ENCODE measurements at regions of chr9 and their contacts with region 1.

Region 1: GRCh38 chr9:136482793-136483588 is at the start of gene SEC16A:
- DNase-seq: peak; percentile 100
- H3K4me3 Mint-ChIP-seq: peak within 1 kb of the TSS; percentile 98
- H3K27ac Mint-ChIP-seq: peak within 1 kb of the TSS; percentile 98
- H3K4me1 Mint-ChIP-seq: peaks cover 30% of the 10 kb centered on the region
- H3K27me3 Mint-ChIP-seq: no peaks in the 10 kb centered on the region
- total RNA-seq, gene SEC16A: 54.1 to 57.0 TPM

Region 2: GRCh38 chr9:136329211-136329627 is 153.8 kb before region 1 on chr9:
- CTCF ChIA-PET with region 1: no interaction called
- POLR2A ChIA-PET with region 1: no interaction called
- intact Hi-C with region 1: no loop called
- DNase-seq: no peak
- H3K4me3 Mint-ChIP-seq: peak overlapping the region; percentile 35
- H3K27ac Mint-ChIP-seq: no peak overlapping the region
- H3K4me1 Mint-ChIP-seq: peaks cover 4% of the 10 kb centered on the region
- H3K27me3 Mint-ChIP-seq: no peaks in the 10 kb centered on the region

Region 3: DNA sequence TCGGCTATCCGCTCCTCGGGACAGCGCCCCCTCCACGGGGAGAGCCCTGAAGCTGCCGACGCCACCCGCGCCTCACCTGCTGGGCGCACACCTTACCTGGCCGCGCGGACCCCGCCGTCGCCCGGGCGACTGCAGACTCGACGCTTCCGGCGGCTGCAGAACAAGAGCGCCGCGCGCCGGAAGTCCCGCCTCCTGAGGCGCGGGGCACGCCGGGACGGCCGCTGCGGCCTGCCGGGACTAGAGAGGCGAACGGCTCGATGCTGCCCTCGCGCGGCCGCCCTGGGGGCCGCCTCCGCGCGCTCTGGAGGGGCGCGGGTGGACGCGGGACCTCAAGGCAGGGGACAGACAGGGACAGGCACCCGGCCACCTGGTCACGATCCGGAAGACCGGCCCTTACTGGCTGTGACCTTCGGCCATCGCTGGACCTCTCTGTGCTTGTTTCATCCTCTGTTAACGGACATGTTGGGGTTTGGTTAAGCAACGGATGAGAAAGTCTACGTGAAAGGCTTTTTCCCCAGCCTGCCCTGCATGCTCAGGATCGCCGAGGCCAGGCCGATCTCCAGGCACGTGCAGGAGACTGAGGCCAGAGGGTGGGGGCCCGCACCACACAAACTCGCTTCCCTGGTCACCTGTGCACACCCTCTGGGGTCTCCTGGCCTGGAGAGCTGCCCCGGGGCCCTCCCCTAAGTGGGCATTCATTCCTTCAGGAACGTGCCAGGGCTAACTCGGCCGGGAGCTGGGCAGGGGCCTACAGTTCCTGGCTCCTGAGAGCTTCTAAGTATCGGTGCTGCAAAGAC is 82.8 kb before region 1 on chr9 and contains the start of gene SNAPC4:
- CTCF ChIA-PET with region 1: no interaction called
- POLR2A ChIA-PET with region 1: no interaction called
- intact Hi-C with region 1: loop called (anchors 1 kb)
- DNase-seq: peak; percentile 91
- H3K4me3 Mint-ChIP-seq: peak within 1 kb of the TSS; percentile 83
- H3K27ac Mint-ChIP-seq: peak within 1 kb of the TSS; percentile 76
- H3K4me1 Mint-ChIP-seq: peaks cover 50% of the 10 kb centered on the region
- H3K27me3 Mint-ChIP-seq: no peaks in the 10 kb centered on the region
- total RNA-seq, gene SNAPC4: 13.9 to 14.3 TPM

Region 4: DNA sequence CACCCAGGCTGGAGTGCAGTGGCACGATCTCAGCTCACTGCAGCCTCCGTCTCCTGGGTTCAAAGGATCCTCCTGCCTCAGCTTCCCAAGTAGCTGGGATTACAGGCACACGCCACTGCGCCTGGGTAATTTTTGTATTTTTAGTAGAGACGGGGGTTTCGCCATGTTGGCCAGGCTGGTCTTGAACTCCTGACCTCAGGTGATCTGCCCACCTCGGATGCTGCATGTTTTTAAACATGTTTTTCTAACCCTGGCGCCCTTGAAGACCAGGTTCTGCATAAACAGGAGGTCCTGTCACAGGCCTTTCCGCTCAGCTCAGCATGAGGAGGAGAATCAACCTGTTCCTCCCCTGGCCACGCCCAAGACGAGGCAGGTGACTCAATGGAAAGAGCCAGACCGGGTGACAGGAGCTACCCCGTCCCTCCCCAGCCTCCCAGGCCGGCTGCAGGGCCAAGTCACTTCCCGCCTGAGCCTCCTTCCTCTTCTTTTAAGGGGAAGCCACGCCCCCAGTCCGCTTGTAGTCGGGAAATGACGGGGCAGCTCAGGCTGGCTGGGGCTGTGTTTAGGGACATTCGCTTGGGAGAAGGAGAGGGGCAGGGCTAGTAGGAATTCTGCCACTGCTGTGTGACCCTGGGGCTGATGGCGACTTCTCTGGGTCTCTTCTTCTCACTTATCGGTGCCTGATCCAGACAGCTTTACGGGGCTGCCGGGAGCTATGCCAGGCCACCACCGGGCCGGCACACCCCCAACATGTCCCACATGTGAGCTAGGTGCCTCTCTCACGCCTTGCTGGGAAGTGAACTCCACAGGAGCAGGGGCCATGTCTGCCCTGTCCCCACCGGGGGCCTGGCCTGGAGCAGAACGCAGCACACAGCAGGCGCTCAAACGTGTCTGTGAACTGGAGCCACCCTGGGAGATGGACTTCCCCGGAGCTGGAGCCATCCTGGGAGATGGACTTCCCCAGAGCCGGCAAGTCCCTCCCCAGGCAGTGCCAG is 56.7 kb after region 1 on chr9:
- CTCF ChIA-PET with region 1: interaction called, 24 read pairs
- POLR2A ChIA-PET with region 1: interaction called, 7 read pairs
- intact Hi-C with region 1: loop called (anchors 1 kb)
- DNase-seq: peak; percentile 99
- H3K4me3 Mint-ChIP-seq: peak overlapping the region; percentile 78
- H3K27ac Mint-ChIP-seq: peak overlapping the region; percentile 99
- H3K4me1 Mint-ChIP-seq: peaks cover 73% of the 10 kb centered on the region
- H3K27me3 Mint-ChIP-seq: no peaks in the 10 kb centered on the region

Region 5: GRCh38 chr9:136644598-136645351 is 161.8 kb after region 1 on chr9:
- CTCF ChIA-PET with region 1: interaction called, 96 read pairs
- POLR2A ChIA-PET with region 1: no interaction called
- intact Hi-C with region 1: loop called (anchors 1 kb)
- DNase-seq: peak; percentile 80
- H3K4me3 Mint-ChIP-seq: no peak overlapping the region
- H3K27ac Mint-ChIP-seq: no peak overlapping the region
- H3K4me1 Mint-ChIP-seq: no peaks in the 10 kb centered on the region
- H3K27me3 Mint-ChIP-seq: peaks cover 22% of the 10 kb centered on the region

Region 6: GRCh38 chr9:136849038-136849959 is 366.3 kb after region 1 on chr9 and contains the start of gene PHPT1:
- CTCF ChIA-PET with region 1: no interaction called
- POLR2A ChIA-PET with region 1: no interaction called
- intact Hi-C with region 1: loop called (anchors 2 kb)
- DNase-seq: peak; percentile 98
- H3K4me3 Mint-ChIP-seq: peak within 1 kb of the TSS; percentile 85
- H3K27ac Mint-ChIP-seq: peak within 1 kb of the TSS; percentile 90
- H3K4me1 Mint-ChIP-seq: peaks cover 19% of the 10 kb centered on the region
- H3K27me3 Mint-ChIP-seq: peaks cover 17% of the 10 kb centered on the region
- total RNA-seq, gene PHPT1: 92.2 to 95.5 TPM

Measured in activated CD4-positive, alpha-beta memory T cell treated with anti-CD3 and anti-CD28 coated beads for 36 hours (primary cell).